Prostate gland (tissue), 2 donors: ENCODE measurements at regions of chr18 and their contacts with region 1.

Region 1: GRCh38 chr18:36309436-36310391 is 12.2 kb downstream of the FHOD3 start:
- DNase-seq: no peak
- H3K4me3 ChIP-seq: no peak overlapping the region
- H3K27ac ChIP-seq: no peak overlapping the region
- H3K4me1 ChIP-seq: no peaks in the 10 kb centered on the region
- H3K27me3 ChIP-seq: no peaks in the 10 kb centered on the region
- CTCF ChIP-seq: no peak
- POLR2A ChIP-seq: no peak

Region 2: DNA sequence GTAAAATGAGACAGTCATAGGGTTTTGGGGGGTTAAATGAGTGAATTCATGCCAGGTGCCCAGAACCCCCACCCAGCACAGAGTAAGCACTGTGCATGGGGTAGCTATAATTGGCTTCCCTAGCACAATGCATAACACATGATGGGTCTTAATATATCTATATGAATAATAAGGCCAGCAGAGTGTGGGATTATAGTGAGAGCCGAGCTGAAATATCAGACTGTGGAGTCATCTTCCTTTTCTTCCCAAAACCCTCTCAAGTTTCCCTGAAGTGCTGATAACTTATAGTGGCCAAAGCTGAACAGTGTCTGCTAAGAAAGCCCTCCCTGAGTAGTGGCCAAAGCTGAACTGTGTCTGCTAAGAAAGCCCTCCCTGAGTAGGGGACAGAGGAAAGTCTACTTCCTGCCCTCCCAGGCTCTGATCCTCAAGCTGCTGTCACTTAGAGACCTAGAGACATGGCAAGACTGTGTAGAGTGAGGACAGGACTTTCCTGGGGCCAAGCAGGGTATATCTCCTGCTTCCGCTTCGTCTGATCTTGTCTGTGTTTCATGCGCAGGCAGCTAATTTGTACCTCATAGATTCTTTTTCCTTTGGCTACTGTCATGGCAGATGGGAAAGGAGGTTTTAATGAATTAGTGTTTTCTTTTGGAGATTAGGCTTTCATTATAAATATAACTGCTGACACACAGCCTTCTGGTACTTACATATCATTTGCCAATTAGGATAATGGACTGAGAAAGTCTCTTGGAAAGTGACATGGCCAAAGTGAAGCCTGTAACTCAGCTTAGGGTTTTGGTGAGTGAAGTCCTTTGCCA is 82.7 kb after region 1 on chr18:
- intact Hi-C with region 1: loop called (anchors 10 kb)
- DNase-seq: no peak
- H3K4me3 ChIP-seq: no peak overlapping the region
- H3K27ac ChIP-seq: no peak overlapping the region
- H3K4me1 ChIP-seq: no peaks in the 10 kb centered on the region
- H3K27me3 ChIP-seq: no peaks in the 10 kb centered on the region
- CTCF ChIP-seq: no peak
- POLR2A ChIP-seq: no peak